PC-9 (cell line): ENCODE measurements at regions of chr6 and their contacts with region 1.

Region 1: DNA sequence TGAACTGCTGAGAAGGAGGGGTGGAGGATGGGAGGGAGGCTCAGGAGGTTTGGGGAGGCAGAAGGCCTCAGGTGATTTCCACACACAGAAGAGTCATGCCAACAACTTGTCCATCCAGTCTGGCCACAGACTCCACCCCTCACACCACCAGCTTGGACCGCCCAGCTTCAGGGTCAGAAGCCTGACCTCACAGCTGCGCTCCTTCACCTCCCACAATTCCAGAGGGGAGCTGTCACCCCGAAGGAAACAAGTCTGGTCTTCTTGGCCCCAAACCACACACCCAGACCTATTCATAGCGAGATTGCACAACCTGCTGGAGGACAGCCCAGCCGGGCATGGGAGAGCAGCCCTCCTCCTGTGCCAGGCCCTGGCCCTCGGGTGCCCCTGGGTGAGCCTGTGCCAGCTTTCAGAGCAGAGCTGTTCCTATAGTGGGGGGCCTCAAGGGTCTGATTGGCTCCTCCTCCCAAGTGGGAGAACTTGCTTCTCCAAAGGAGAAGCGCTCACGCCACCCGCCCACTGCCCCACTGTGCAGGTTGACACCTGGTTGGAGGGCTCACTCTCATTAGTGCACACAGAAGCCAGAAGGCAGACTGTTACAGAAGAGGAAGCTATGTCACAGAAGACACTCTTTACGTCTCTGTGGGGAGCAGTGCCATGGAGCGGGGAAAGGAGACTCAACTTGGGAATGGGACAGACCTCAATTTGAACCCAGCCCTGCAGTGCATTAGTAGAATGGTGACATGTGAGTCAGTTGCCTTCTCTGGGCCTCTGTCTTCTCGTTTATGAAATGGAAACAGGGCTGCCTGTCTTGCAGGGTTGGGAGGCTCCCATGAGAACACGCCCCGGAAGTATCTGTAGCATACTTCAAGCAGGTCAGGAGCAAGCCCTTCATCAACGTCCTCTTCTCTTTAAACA is 128.8 kb downstream of the FOXO3 start:
- DNase-seq: peak; percentile 96 to 99
- H3K4me3 ChIP-seq: peak overlapping the region; percentile 7; the same call in 1 of the 2 replicates
- H3K27ac ChIP-seq: peak overlapping the region; percentile 83
- H3K4me1 ChIP-seq: peaks cover 66% of the 10 kb centered on the region
- H3K27me3 ChIP-seq: no peaks in the 10 kb centered on the region
- CTCF ChIP-seq: no peak

Region 2: GRCh38 chr6:108589287-108589791 is 100.2 kb before region 1 on chr6:
- CTCF ChIA-PET with region 1: no interaction called
- POLR2A ChIA-PET with region 1: interaction called, 3 read pairs
- intact Hi-C with region 1: loop called (anchors 2 kb)
- DNase-seq: peak; percentile 78 to 90
- H3K4me3 ChIP-seq: no peak overlapping the region
- H3K27ac ChIP-seq: peak overlapping the region; percentile 45
- H3K4me1 ChIP-seq: peaks cover 75% of the 10 kb centered on the region
- H3K27me3 ChIP-seq: no peaks in the 10 kb centered on the region
- CTCF ChIP-seq: no peak

Region 3: DNA sequence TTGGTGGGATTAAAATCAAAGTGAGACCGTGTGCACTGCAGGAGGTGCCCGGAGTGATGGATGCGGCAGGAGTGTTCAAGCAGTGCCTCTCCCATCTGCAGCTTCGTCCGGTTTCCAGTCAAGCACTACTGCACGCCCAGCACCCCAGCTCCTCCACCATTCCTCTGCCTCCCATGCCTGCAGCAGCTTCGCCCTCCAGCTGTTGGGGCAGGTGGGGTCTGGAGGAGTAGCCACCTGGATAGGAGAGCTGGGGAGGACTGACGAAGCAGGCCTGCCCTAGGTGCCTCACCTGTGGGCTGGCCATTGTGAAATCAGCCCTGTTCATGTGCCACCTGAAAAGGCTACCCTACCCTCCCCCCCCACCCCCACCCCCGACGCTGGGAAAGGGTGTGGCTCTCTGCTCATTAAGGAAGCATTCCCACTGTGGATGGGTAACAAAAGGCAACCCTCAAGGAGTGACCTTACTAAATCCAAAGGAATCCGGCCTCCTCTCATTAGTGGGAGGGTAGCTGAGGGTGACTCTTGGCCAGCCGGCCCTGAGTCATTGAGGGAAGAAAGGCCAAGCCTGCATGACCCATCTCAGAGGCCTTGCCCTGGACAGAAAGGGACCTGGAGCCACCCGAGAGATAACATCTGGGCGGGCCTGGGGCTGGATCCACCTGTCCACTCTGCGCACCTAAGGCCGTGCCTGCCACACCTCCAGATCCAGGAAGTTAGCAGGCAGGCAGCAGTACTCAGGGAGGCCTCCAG is 42.8 kb after region 1 on chr6:
- CTCF ChIA-PET with region 1: interaction called, 3 read pairs
- POLR2A ChIA-PET with region 1: interaction called, 8 read pairs
- intact Hi-C with region 1: loop called (anchors 1 kb)
- DNase-seq: peak; percentile 96 to 100
- H3K4me3 ChIP-seq: peak overlapping the region; percentile 46; the same call in 1 of the 2 replicates
- H3K27ac ChIP-seq: peak overlapping the region; percentile 99
- H3K4me1 ChIP-seq: peaks cover 71% of the 10 kb centered on the region
- H3K27me3 ChIP-seq: no peaks in the 10 kb centered on the region
- CTCF ChIP-seq: no peak

Region 4: GRCh38 chr6:108782179-108783041 is 92.9 kb after region 1 on chr6:
- CTCF ChIA-PET with region 1: no interaction called
- POLR2A ChIA-PET with region 1: no interaction called
- intact Hi-C with region 1: loop called (anchors 1 kb)
- DNase-seq: peak; percentile 89 to 91
- H3K4me3 ChIP-seq: peak overlapping the region; percentile 43
- H3K27ac ChIP-seq: peak overlapping the region; percentile 77
- H3K4me1 ChIP-seq: peaks cover 45% of the 10 kb centered on the region
- H3K27me3 ChIP-seq: no peaks in the 10 kb centered on the region
- CTCF ChIP-seq: peak; percentile 91

Region 5: GRCh38 chr6:108883172-108883571 is 193.7 kb after region 1 on chr6:
- CTCF ChIA-PET with region 1: no interaction called
- POLR2A ChIA-PET with region 1: interaction called, 16 read pairs
- intact Hi-C with region 1: no loop called
- DNase-seq: no peak
- H3K4me3 ChIP-seq: no peak overlapping the region
- H3K27ac ChIP-seq: no peak overlapping the region
- H3K4me1 ChIP-seq: no peaks in the 10 kb centered on the region
- H3K27me3 ChIP-seq: no peaks in the 10 kb centered on the region
- CTCF ChIP-seq: no peak